ENCODE measurements at regions of chr13 and their contacts with region 1.

Region 1: DNA sequence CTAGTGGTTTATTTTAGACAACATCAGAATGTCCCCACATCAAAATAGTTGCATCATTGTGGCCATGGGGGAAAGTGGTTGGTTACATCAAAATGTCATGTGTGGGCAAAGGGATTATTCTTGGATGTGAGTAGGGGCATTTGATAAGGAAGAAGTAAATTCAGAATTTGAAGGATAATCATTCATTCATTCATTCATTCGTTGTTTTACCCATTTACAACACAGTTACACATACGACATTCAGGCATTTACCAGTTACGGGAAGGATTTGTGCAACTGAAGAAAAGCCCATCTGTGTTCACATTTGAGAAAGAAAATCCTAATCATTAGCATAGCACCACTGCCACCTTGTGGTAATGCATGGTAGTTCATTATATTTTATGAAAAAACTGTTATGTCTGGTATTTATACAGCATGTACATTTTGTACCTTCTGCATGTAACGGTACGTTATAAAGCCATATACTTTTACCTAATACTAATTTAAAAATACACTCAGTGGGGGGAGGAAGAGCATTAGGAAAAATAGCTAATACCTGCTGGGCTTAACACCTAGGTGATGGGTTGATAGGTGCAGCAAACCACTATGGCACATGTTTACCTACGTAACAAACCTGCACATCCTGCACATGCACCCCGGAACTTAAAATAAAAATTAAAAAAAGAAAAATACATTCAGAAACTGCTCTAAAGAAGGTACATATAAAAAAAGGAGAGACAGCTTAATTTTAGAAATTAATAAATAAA is 62.1 kb downstream of the DGKH start:
- H3K4me3 Mint-ChIP-seq: no peak overlapping the region
- H3K27ac Mint-ChIP-seq: no peak overlapping the region
- H3K4me1 Mint-ChIP-seq: peaks cover 5% of the 10 kb centered on the region
- H3K27me3 Mint-ChIP-seq: no peaks in the 10 kb centered on the region

Region 2: DNA sequence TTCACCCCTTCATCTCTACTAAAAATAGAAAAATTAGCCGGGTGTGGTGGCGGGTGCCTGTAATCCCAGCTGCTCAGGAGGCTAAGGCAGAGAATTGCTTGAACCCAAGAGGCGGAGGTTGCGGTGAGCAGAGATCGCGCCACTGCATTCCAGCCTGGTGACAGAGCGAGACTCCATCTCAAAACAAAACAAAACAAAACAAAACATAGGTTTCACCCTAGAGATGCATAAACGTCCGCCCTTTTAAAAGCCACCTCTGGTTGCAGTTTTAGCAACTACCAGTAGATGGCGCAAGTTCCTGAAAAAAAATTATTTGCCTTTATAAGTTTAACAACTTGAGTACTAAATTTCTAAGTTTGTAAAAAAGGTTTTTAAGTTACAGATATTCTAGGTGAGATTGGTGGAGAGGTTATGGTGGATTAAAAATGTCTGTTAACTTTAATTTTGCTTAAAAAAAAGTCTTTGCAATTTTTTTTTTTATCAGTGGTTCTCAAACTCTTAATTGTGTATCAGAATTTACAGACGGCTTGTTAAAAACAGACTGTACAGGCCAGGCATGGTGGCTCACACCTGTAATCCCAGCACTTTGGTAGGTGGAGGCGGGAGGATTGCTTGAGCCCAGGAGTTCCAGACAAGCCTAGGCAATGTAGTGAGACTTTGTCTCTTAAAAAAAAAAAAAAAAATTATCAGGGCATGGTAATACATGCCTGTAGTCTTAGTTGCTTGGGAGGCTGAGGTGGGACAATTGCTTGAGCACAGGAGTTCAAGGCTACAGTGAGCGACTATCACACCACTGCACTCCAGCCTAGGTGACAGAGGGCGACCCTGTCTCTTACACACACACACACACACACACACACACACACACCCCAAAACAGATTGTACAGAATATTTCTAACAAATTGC is 757.4 kb before region 1 on chr13:
- intact Hi-C with region 1: loop called (anchors 10 kb)
- H3K4me3 Mint-ChIP-seq: no peak overlapping the region
- H3K27ac Mint-ChIP-seq: no peak overlapping the region
- H3K4me1 Mint-ChIP-seq: peaks cover 19% of the 10 kb centered on the region
- H3K27me3 Mint-ChIP-seq: no peaks in the 10 kb centered on the region

Region 3: DNA sequence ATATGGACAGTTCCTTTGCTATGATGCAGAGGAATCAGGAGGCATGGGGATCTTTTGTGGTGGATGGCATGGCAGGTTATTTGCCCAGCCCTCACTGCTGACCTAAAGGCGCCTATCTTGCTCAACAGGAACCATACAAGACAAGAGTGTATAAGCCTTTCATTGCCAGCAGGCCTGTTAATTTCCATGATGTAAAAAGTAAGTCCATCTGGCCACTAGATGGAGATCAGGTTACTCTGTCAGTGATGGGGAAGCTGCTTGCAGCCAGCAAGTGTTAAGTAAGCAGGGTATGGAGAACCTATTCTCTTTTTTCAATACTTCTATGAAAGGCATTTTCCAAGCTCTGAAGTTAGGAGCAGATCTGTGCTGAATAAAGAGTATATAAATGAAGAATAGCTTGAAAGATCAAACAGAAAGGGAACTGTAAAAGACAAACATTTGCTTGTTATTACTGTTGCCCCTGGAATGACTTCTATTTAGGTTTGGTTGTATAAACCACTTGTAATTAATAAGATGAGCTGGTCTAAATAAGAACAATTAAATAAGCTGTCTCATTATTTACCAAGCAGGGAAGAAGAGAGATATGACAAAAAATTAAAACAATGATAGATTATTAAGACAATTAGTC is 442.3 kb before region 1 on chr13:
- intact Hi-C with region 1: loop called (anchors 1 kb)
- H3K4me3 Mint-ChIP-seq: no peak overlapping the region
- H3K27ac Mint-ChIP-seq: no peak overlapping the region
- H3K4me1 Mint-ChIP-seq: no peaks in the 10 kb centered on the region
- H3K27me3 Mint-ChIP-seq: no peaks in the 10 kb centered on the region

Region 4: GRCh38 chr13:41916173-41916954 is 194.2 kb before region 1 on chr13:
- intact Hi-C with region 1: loop called (anchors 10 kb)
- H3K4me3 Mint-ChIP-seq: no peak overlapping the region
- H3K27ac Mint-ChIP-seq: no peak overlapping the region
- H3K4me1 Mint-ChIP-seq: peaks cover 11% of the 10 kb centered on the region
- H3K27me3 Mint-ChIP-seq: no peaks in the 10 kb centered on the region

Region 5: GRCh38 chr13:42022796-42023493 is 87.6 kb before region 1 on chr13:
- intact Hi-C with region 1: no loop called
- H3K4me3 Mint-ChIP-seq: no peak overlapping the region
- H3K27ac Mint-ChIP-seq: no peak overlapping the region
- H3K4me1 Mint-ChIP-seq: no peaks in the 10 kb centered on the region
- H3K27me3 Mint-ChIP-seq: peaks cover under 1% of the 10 kb centered on the region

Region 6: GRCh38 chr13:42039457-42039945 is 71.1 kb before region 1 on chr13:
- intact Hi-C with region 1: no loop called
- H3K4me3 Mint-ChIP-seq: peak overlapping the region; percentile 92
- H3K27ac Mint-ChIP-seq: peak overlapping the region; percentile 76
- H3K4me1 Mint-ChIP-seq: peaks cover 23% of the 10 kb centered on the region
- H3K27me3 Mint-ChIP-seq: peaks cover 40% of the 10 kb centered on the region

Region 7: GRCh38 chr13:42218576-42218975 is 108.0 kb after region 1 on chr13:
- intact Hi-C with region 1: no loop called
- H3K4me3 Mint-ChIP-seq: no peak overlapping the region
- H3K27ac Mint-ChIP-seq: no peak overlapping the region
- H3K4me1 Mint-ChIP-seq: no peaks in the 10 kb centered on the region
- H3K27me3 Mint-ChIP-seq: no peaks in the 10 kb centered on the region

Measured in dendritic cell treated with granulocyte-macrophage colony-stimulating factor and Interleukin-4, amounts not matched to agents 40 ng/mL and 50 ng/mL, for 4 days (primary cell).